Posterior vena cava (tissue), 2 donors: ENCODE measurements at regions of chr10 and their contacts with region 1.

Region 1: GRCh38 chr10:22682237-22683139 is 31.9 kb downstream of the PIP4K2A start:
- DNase-seq: no peak

Region 2: GRCh38 chr10:21525367-21526183 is 1156.9 kb before region 1 on chr10 and contains the start of gene SKIDA1:
- intact Hi-C with region 1: no loop called
- DNase-seq: peak; percentile 96
- total RNA-seq, gene SKIDA1: 0.33 to 1.2 TPM

Region 3: DNA sequence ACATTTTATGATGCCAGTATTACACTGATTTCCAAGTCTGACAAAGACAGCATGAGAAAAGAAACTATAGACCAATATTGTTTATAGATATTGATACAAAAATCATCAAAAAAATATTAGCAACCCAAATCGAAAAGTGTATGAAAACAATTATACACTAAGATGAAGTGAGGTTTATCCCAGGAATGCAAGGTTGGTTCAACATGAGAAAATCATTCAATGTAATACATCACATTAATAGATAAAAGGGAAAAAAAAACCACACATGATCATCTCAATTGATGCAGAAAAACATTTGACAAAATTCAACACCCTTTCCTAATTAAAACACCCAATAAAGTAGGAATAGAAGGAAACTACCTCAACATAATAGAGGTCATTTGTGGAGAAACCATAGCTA is 832.9 kb before region 1 on chr10:
- intact Hi-C with region 1: loop called in 1 of 2 experiments (anchors 5 kb)
- DNase-seq: no peak

Region 4: DNA sequence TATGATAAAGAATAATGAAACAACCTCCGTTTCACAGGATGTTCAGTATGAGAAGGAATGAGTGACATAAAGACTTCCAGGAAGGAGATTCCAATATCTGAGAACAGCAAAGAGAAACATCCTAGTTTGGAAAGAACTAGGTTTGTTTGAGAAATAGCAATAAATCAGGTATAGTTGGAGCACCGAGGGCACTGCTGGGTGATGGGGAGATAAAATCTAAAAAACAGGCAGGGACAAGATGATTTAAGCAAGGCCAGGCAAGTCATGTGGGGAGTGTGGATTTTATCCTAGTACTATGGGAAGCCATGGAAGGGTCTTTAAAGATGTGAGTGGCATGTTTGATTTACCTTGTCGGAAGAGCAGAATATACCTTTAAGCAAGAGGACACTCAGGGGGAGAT is 167.5 kb before region 1 on chr10:
- intact Hi-C with region 1: no loop called
- DNase-seq: no peak